Heart right ventricle (tissue), 16 donors: ENCODE measurements at regions of chr7 and their contacts with region 1.

Region 1: DNA sequence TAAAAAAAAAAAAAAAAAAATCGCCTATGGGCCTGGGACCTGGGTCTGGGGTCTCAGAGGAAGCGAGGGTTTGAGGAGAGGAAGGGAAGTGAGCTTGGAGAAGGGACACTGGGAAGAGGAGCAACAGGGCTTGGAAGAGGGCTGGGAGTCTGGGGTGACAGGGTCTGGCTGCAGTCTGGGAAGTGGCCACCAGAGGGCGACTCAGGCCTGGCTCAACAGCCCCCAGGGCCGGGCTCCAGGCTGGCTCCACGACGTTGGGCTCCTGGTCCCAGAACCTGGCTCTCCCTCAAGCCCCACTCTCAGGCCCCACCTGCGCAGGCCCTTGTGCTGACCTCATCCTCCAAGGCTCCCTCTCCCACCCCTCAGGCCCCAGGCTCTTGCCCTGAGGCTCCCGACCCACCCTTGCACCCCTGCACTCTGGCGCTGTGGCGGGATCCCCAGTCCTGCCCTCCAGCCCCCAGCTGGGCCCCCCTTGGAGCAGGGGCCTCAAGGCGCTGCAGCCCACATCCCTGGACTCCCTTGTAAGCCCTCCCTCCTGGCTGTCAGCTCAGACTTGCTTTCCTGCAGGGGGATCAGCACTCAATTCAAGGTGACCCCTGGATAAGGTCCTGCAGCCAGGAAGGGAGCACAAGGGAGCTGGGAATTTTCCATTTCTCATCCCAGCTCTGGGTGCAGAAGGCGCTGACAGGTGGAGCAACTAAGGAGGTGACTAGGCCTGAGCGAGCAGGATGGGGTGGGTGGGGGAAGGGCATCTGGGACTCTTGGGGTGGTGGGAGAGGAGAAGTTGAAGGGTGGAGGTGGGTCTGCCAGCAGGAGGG is 5.4 kb upstream of the SPACDR start:
- DNase-seq: peak; percentile 86 to 92
- ATAC-seq: peak; percentile 69 to 81 (median 75)
- H3K4me3 ChIP-seq: no peak overlapping the region
- H3K27ac ChIP-seq: peak overlapping the region in 8 of 10 donors; percentile 29 to 76 (median 66)
- H3K4me1 ChIP-seq: peaks cover 17 to 90% (median 55%) of the 10 kb centered on the region in 9 donors
- H3K27me3 ChIP-seq: no peaks in the 10 kb centered on the region
- CTCF ChIP-seq: peak; percentile 90 to 95 (median 94)

Region 2: DNA sequence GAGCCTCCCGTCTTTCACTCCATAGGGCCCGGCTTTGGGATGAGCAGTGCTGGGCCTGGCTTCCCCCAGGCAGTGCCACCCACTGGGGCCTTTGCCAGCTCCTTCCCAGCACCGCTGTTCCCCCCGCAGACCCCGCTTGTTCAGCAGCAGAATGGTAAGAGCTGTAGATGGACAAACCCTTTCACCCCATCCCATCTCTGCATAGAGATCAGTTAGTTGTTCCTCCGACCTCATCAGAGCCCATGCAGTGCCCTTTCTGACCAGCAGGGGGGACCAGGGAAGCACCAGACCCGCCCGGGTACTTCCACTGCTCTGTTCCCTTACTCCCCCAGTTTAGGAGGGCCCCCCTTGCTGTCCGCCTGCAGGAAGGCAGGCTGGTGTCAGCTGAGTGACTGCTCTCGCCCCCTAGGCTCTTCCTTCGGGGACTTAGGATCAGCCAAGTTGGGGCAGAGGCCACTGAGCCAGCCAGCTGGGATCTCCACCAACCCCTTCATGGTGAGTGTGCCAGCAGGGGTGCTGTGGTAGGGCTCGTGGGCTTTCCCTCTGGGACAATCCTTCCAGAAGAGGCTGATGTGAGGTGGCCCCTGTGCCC is 94.5 kb after region 1 on chr7:
- intact Hi-C with region 1: loop called in 9 of 10 experiments (anchors 1 to 5 kb)
- DNase-seq: peak; percentile 82 to 83
- ATAC-seq: peak; percentile 41 to 78 (median 62)
- H3K4me3 ChIP-seq: no peak overlapping the region
- H3K27ac ChIP-seq: no peak overlapping the region
- H3K4me1 ChIP-seq: peaks cover 0 to 21% (median 4%) of the 10 kb centered on the region in 9 donors
- H3K27me3 ChIP-seq: no peaks in the 10 kb centered on the region
- CTCF ChIP-seq: peak; percentile 88 to 98 (median 94)

Region 3: GRCh38 chr7:100691676-100692577 is 222.5 kb after region 1 on chr7:
- intact Hi-C with region 1: loop called in 8 of 10 experiments (anchors 5 to 10 kb)
- DNase-seq: peak; percentile 81 to 83
- ATAC-seq: peak; percentile 72 to 92 (median 86)
- H3K4me3 ChIP-seq: peak overlapping the region in 9 of 10 donors; percentile 3 to 99 (median 80)
- H3K27ac ChIP-seq: peak overlapping the region in 6 of 10 donors; percentile 15 to 87 (median 46)
- H3K4me1 ChIP-seq: peaks cover 34 to 67% (median 51%) of the 10 kb centered on the region in 9 donors
- H3K27me3 ChIP-seq: no peaks in the 10 kb centered on the region
- CTCF ChIP-seq: peak; percentile 70 to 92 (median 90)

Region 4: GRCh38 chr7:100719523-100720319 is 250.3 kb after region 1 on chr7:
- intact Hi-C with region 1: loop called in 2 of 10 experiments (anchors 10 kb)
- DNase-seq: no peak
- ATAC-seq: no peak
- H3K4me3 ChIP-seq: no peak overlapping the region
- H3K27ac ChIP-seq: no peak overlapping the region
- H3K4me1 ChIP-seq: peaks cover 0 to 12% (median 0%) of the 10 kb centered on the region in 9 donors
- H3K27me3 ChIP-seq: peaks cover 4 to 61% (median 53%) of the 10 kb centered on the region in 7 donors
- CTCF ChIP-seq: no peak